B cell (primary cell): ENCODE measurements at regions of chr4 and their contacts with region 1.

Region 1: GRCh38 chr4:53043055-53043454 is 180.9 kb downstream of the RASL11B start:
- DNase-seq: no peak
- ATAC-seq: no peak
- H3K4me3 ChIP-seq: no peak overlapping the region
- H3K4me3 Mint-ChIP-seq: no peak overlapping the region
- H3K27ac ChIP-seq: no peak overlapping the region
- H3K27ac Mint-ChIP-seq: no peak overlapping the region
- H3K4me1 ChIP-seq: no peaks in the 10 kb centered on the region
- H3K4me1 Mint-ChIP-seq: no peaks in the 10 kb centered on the region
- H3K27me3 ChIP-seq: no peaks in the 10 kb centered on the region
- H3K27me3 Mint-ChIP-seq: no peaks in the 10 kb centered on the region
- CTCF ChIP-seq: no peak

Region 2: GRCh38 chr4:53026233-53026632 is 16.8 kb before region 1 on chr4:
- CTCF ChIA-PET with region 1: no interaction called
- POLR2A ChIA-PET with region 1: no interaction called
- intact Hi-C with region 1: no loop called
- DNase-seq: no peak
- ATAC-seq: no peak
- H3K4me3 ChIP-seq: no peak overlapping the region
- H3K4me3 Mint-ChIP-seq: no peak overlapping the region
- H3K27ac ChIP-seq: no peak overlapping the region
- H3K27ac Mint-ChIP-seq: no peak overlapping the region
- H3K4me1 ChIP-seq: no peaks in the 10 kb centered on the region
- H3K4me1 Mint-ChIP-seq: no peaks in the 10 kb centered on the region
- H3K27me3 ChIP-seq: no peaks in the 10 kb centered on the region
- H3K27me3 Mint-ChIP-seq: no peaks in the 10 kb centered on the region
- CTCF ChIP-seq: no peak

Region 3: GRCh38 chr4:53059256-53059655 is 16.2 kb after region 1 on chr4:
- CTCF ChIA-PET with region 1: no interaction called
- POLR2A ChIA-PET with region 1: no interaction called
- intact Hi-C with region 1: loop called (anchors 2 kb)
- DNase-seq: no peak
- ATAC-seq: no peak
- H3K4me3 ChIP-seq: no peak overlapping the region
- H3K4me3 Mint-ChIP-seq: no peak overlapping the region
- H3K27ac ChIP-seq: no peak overlapping the region
- H3K27ac Mint-ChIP-seq: no peak overlapping the region
- H3K4me1 ChIP-seq: no peaks in the 10 kb centered on the region
- H3K4me1 Mint-ChIP-seq: no peaks in the 10 kb centered on the region
- H3K27me3 ChIP-seq: no peaks in the 10 kb centered on the region
- H3K27me3 Mint-ChIP-seq: no peaks in the 10 kb centered on the region
- CTCF ChIP-seq: no peak